PC-3 (cell line): ENCODE measurements at regions of chr2 and their contacts with region 1.

Region 1: DNA sequence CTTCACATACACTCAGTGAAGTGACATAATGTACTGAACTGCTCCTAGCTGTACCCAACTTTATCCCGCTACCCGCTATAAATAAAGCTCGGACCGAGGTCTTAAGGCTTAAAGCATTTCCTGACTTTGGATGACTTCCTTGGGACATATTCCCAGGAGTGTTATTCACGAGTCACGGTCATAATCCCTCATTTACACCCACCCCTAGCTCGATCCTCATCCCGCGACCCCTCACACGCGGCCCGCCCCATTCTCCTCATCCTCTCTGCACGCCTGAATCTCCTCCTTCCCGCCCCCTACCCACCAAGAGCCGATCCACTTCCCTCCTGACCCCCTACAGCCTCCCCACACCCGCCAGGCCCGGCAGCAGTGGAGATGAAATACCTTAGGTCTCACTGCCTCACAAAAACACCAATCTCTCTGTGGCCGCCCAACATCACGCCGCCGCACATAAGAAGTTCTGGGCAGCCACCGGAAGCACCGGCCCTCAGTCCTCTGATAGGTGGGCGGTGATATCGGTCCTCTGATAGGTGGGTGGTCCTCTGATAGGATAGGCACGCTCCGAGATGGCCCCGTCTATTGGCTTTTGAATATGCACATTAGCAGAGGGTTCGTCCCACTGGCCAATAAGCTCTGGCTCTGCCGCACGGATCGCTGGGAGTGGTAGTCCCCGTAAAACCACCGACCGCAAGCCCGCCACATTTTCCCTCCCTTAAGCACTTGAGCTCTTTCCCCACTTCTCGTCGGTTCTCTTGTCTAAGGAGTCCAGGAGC is at the start of gene WDCP:
- DNase-seq: peak; percentile 98
- ATAC-seq: peak; percentile 99
- H3K4me3 ChIP-seq: peak within 1 kb of the TSS; percentile 91
- H3K27ac ChIP-seq: no peak within 1 kb of the TSS
- H3K4me1 ChIP-seq: peaks cover 11% of the 10 kb centered on the region
- H3K27me3 ChIP-seq: no peaks in the 10 kb centered on the region
- CTCF ChIP-seq: no peak
- total RNA-seq, gene WDCP: 5.6 and 11.5 TPM in 2 replicates

Region 2: GRCh38 chr2:23988371-23988770 is 58.7 kb before region 1 on chr2:
- CTCF ChIA-PET with region 1: no interaction called
- POLR2A ChIA-PET with region 1: no interaction called
- intact Hi-C with region 1: loop called (anchors 1 kb)
- DNase-seq: peak; percentile 62
- ATAC-seq: peak; percentile 88
- H3K4me3 ChIP-seq: no peak overlapping the region
- H3K27ac ChIP-seq: no peak overlapping the region
- H3K4me1 ChIP-seq: no peaks in the 10 kb centered on the region
- H3K27me3 ChIP-seq: no peaks in the 10 kb centered on the region
- CTCF ChIP-seq: peak; percentile 80

Region 3: DNA sequence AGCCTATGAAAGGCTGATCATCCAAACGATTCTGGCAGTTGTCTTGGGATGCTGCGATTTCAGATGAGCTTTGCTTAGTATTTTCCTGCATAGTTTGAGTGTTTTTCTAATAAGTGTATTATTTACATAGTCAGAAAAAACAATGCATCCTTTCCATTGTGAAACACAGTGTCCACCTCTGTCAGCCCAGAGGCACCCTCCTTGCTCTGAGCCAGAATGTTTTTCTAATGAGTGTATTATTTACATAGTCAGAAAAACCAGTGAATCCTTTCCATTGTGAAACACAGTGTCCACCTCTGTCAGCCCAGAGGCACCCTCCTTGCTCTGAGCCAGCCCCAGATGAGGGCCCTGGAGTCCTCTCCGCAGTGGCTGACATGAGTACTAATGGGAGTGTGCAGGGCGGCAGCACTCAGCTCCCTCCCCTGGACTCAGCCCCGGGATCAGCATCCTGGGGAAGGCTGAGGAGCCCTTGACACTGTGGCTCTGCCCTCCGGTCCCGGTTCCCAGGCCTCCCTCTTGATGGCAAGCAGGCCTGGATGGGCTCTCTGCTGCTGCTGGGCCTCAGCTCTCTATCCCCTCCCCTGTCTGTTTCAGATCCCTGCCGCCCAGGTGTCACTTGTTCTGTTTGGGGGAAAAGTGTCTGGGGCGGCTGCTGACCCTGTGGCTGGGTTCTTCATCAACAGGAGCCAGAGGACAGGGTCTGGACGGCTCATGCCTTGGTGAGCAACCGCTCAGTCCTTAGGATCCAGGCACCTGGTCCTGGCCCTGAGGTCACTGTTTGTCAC is 31.4 kb before region 1 on chr2:
- CTCF ChIA-PET with region 1: no interaction called
- POLR2A ChIA-PET with region 1: interaction called, 3 read pairs
- intact Hi-C with region 1: loop called (anchors 1 kb)
- DNase-seq: peak; percentile 98
- ATAC-seq: peak; percentile 94
- H3K4me3 ChIP-seq: no peak overlapping the region
- H3K27ac ChIP-seq: peak overlapping the region; percentile 79
- H3K4me1 ChIP-seq: peaks cover 46% of the 10 kb centered on the region
- H3K27me3 ChIP-seq: no peaks in the 10 kb centered on the region
- CTCF ChIP-seq: no peak

Region 4: GRCh38 chr2:24065341-24065740 is 18.2 kb after region 1 on chr2:
- CTCF ChIA-PET with region 1: no interaction called
- POLR2A ChIA-PET with region 1: no interaction called
- intact Hi-C with region 1: no loop called
- DNase-seq: no peak
- ATAC-seq: no peak
- H3K4me3 ChIP-seq: no peak overlapping the region
- H3K27ac ChIP-seq: no peak overlapping the region
- H3K4me1 ChIP-seq: no peaks in the 10 kb centered on the region
- H3K27me3 ChIP-seq: no peaks in the 10 kb centered on the region
- CTCF ChIP-seq: no peak